Endothelial cell of umbilical vein (primary cell): ENCODE measurements at regions of chr3 and their contacts with region 1.

Region 1: DNA sequence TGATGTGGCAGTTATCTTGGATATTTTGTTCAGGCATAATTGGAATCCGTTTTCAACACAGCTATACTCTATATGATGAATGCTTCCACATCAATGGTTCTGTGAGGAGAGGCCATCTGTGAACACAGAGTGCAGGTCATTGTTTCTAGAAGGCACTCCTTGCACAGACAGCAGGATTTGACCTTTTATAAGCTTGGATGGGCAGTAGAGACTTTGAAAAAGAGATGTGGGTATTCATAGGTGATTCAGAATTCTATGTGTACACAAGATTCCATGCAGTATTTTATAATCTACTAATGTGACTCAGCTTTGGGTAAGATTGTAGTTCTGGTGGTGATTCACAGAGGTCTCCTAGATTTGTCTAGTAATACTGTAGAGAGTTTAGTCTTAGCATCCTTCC is 12.5 kb downstream of the ARPP21 start:
- DNase-seq: no peak
- H3K4me3 ChIP-seq: no peak overlapping the region
- H3K27ac ChIP-seq: no peak overlapping the region
- H3K4me1 ChIP-seq: no peaks in the 10 kb centered on the region
- H3K27me3 ChIP-seq: no peaks in the 10 kb centered on the region
- CTCF ChIP-seq: no peak
- POLR2A ChIP-seq: no peak

Region 2: DNA sequence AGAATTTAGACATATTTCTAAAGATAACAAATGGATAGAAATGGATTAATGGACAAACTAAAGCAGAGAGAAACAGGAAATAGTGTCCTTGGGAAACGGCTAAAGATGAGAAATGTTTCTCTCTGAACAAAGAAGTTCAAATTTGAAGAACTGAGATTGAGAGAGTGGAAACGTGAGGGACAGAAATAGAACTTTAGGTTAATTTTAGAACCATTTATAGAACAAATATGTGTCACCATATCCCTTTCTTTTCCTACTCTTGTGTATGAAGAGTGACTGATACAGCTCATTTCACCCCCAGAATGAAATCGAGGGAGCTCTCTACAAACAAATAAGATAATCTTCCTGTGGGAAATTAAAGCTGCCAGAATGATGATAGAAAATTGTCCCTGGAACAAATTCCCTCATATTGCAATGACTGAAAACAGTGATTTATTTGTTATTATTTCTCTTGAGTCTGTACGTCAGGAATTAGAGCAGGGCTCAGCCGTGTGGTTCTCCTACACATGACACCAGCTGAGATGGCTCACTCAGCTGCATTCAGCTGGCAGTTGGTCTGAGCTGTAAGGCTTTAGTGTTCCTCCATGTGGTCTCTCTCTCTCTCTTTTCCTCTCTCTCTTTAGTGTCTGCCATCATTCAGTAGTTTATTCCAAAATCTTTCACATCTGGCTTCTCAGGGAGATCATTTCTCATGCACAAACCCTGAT is 59.1 kb before region 1 on chr3:
- CTCF ChIA-PET with region 1: no interaction called
- POLR2A ChIA-PET with region 1: no interaction called
- dilution Hi-C with region 1: no loop called
- intact Hi-C with region 1: no loop called
- DNase-seq: no peak
- H3K4me3 ChIP-seq: no peak overlapping the region
- H3K27ac ChIP-seq: no peak overlapping the region
- H3K4me1 ChIP-seq: no peaks in the 10 kb centered on the region
- H3K27me3 ChIP-seq: no peaks in the 10 kb centered on the region
- CTCF ChIP-seq: no peak
- POLR2A ChIP-seq: no peak

Region 3: DNA sequence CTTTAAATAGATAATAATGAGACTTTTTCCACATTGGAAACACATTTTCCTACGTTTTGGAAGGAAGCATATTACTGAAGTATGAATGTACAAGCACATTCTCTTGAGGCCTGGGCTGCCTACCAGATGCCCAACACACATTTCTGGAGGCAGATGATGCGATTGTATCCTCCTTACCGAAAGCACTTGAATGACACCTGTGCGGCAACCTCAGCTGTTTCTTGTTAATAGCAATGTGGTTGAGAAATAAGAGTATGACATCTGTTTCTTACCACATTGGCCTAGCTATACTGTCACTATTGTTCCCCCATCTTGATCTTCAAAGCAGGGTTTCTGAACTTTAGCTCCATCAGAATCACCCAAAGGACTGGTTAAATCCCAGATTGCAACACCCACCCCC is 72.3 kb after region 1 on chr3:
- CTCF ChIA-PET with region 1: no interaction called
- POLR2A ChIA-PET with region 1: no interaction called
- dilution Hi-C with region 1: no loop called
- intact Hi-C with region 1: loop called (anchors 2 kb)
- DNase-seq: no peak
- H3K4me3 ChIP-seq: no peak overlapping the region
- H3K27ac ChIP-seq: no peak overlapping the region
- H3K4me1 ChIP-seq: no peaks in the 10 kb centered on the region
- H3K27me3 ChIP-seq: peaks cover 0 to 2% of the 10 kb centered on the region in 2 experiments
- CTCF ChIP-seq: no peak
- POLR2A ChIP-seq: no peak

Region 4: GRCh38 chr3:36172699-36173098 is 520.8 kb after region 1 on chr3:
- CTCF ChIA-PET with region 1: no interaction called
- POLR2A ChIA-PET with region 1: no interaction called
- dilution Hi-C with region 1: no loop called
- intact Hi-C with region 1: no loop called
- DNase-seq: no peak
- H3K4me3 ChIP-seq: no peak overlapping the region
- H3K27ac ChIP-seq: no peak overlapping the region
- H3K4me1 ChIP-seq: no peaks in the 10 kb centered on the region
- H3K27me3 ChIP-seq: no peaks in the 10 kb centered on the region
- CTCF ChIP-seq: no peak
- POLR2A ChIP-seq: no peak